Thyroid gland (tissue), 4 donors: ENCODE measurements at regions of chr14 and their contacts with region 1.

Region 1: DNA sequence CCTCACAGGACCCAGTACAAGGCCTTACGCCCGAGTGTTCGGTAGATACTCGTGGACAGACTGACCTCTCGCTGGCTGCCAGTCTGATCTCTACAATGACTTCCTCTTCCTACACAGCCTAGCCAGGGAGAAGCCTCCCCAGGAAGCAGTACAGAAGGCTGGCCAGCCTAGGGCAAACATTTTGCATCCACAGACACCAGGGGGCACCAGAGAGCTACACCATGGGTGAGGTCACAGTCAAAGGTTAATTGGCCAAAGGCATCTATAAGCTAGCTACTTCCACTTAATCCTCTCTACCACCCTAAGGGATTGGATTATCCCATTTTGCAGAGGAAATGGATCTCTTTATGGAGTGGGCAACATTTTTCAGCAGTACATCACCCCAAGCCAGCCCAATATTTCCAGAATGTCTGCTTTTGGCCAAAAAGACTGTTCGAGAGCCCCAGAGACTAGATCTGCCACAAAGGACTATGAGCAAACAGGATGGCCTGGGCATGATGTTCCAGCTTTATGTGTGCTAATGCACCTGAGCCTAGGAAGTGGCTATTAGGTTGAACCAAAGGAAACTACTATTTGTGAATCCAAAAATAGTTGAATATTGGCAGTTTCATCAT is 14.6 kb upstream of the PNMA1 start:
- DNase-seq: peak; percentile 77 to 86
- H3K4me3 ChIP-seq: no peak overlapping the region
- H3K27ac ChIP-seq: peak overlapping the region in 2 of 3 donors; percentile 22 to 37
- H3K4me1 ChIP-seq: peaks cover 12 to 30% of the 10 kb centered on the region in 2 donors
- H3K27me3 ChIP-seq: no peaks in the 10 kb centered on the region
- CTCF ChIP-seq: peak; percentile 84 to 96 (median 92)
- POLR2A ChIP-seq: no peak

Region 2: DNA sequence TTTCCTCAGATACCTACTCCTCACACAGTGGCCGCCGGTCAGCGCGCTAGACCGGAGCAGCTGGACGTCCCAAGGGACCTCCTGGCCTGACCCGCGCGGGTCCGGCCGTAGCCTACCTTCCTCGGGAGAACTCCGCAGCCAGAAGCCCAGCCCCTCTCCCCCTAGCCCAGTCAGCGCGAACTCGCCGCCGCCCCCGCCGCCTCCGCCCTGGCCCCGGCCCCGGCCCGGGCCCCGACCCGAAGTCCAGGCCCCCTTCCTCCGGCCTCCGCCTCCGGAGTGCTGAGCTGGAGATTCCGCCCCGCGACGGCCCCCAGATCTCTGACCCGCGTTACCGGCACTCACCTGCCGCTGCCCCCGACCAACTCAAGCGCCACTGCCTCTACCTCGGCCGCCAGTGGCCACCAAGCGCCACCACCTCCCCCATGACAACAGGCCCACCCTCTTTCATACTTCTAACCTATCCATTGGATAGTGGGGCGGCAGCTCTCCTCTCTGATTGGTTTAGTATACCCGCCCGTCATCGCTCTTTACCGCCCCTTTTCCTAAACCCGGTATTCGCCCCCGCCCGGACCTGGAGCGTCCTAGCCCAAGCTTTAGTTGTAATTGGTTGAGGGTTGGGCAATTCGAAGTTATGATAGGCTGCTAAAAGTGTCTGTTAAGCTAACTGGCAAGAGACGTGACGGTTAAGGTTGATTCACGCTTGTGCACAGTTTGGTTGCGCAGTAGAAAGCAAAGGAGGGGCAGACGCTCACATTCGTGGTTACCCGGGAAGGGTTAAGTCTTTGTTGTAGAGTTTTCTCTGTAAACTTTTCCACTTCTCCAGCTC is 270.5 kb before region 1 on chr14 and contains the start of gene NUMB:
- intact Hi-C with region 1: no loop called
- DNase-seq: peak; percentile 99
- H3K4me3 ChIP-seq: peak within 1 kb of the TSS; percentile 51 to 97 (median 86)
- H3K27ac ChIP-seq: peak within 1 kb of the TSS; percentile 89 to 91 (median 91)
- H3K4me1 ChIP-seq: peaks cover 19 to 46% of the 10 kb centered on the region in 2 donors
- H3K27me3 ChIP-seq: no peaks in the 10 kb centered on the region
- CTCF ChIP-seq: peak in 2 of 6 experiments; percentile 9 to 28
- POLR2A ChIP-seq: peak; percentile 68 to 95
- total RNA-seq, gene NUMB: 67.1 to 101 (median 86.7) TPM

Region 3: GRCh38 chr14:73825551-73826188 is 96.8 kb after region 1 on chr14:
- intact Hi-C with region 1: loop called (anchors 2 kb)
- DNase-seq: peak; percentile 94 to 96
- H3K4me3 ChIP-seq: no peak overlapping the region
- H3K27ac ChIP-seq: no peak overlapping the region
- H3K4me1 ChIP-seq: peaks cover 4 to 6% of the 10 kb centered on the region in 2 donors
- H3K27me3 ChIP-seq: no peaks in the 10 kb centered on the region
- CTCF ChIP-seq: peak; percentile 80 to 89 (median 86)
- POLR2A ChIP-seq: no peak